ENCODE measurements at regions of chr12 and their contacts with region 1.

Region 1: GRCh38 chr12:58540480-58541299 is 379.6 kb downstream of the LRIG3 start:
- DNase-seq: no peak
- H3K4me3 ChIP-seq: no peak overlapping the region
- H3K27me3 ChIP-seq: no peaks in the 10 kb centered on the region
- CTCF ChIP-seq: peak; percentile 88

Region 2: GRCh38 chr12:57632694-57633477 is 907.8 kb before region 1 on chr12 and contains the start of gene B4GALNT1:
- CTCF ChIA-PET with region 1: no interaction called
- POLR2A ChIA-PET with region 1: no interaction called
- DNase-seq: no peak
- H3K4me3 ChIP-seq: peak within 1 kb of the TSS; percentile 49
- H3K27me3 ChIP-seq: peaks cover 16% of the 10 kb centered on the region
- CTCF ChIP-seq: peak; percentile 87
- polyA plus RNA-seq, gene B4GALNT1: 1.2 and 2.7 TPM in 2 replicates

Region 3: DNA sequence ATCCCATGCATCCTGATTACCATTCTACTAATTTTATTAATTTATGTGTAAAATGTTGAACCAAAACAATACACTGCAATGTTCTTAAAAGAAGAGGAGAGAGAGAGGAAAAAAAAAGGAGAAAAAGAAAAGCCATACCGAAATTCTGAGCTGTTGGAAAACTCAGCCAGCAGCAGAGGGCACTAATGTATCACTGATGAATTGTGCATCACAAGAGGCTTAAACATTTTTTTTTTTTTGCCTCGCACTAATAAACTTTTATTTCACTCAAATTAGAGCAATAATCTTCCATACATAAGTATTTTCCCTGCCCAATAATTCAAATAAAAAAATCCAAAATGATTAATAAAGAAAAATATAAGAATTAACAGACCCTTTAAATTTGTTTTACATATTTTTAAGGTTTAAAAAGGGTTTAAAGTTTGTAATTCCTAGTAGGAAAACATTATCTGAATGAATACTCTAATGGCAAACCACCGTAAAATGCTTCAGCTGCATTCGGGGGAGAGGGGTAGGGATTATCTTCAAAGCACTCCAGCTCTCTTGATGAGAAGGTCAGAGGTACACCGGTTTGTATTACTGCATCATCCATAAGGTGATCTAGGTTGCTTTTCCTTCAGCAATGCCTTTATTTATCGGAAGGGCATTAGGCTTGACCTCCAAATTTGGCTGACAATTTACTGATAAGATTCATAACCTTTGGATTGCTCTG is 557.4 kb before region 1 on chr12:
- CTCF ChIA-PET with region 1: interaction called, 15 read pairs
- POLR2A ChIA-PET with region 1: no interaction called
- DNase-seq: peak; percentile 17
- H3K4me3 ChIP-seq: no peak overlapping the region
- H3K27me3 ChIP-seq: no peaks in the 10 kb centered on the region
- CTCF ChIP-seq: peak; percentile 65

Region 4: GRCh38 chr12:58416236-58416635 is 124.5 kb before region 1 on chr12:
- CTCF ChIA-PET with region 1: interaction called, 13 read pairs
- POLR2A ChIA-PET with region 1: no interaction called
- DNase-seq: peak; percentile 75
- H3K4me3 ChIP-seq: no peak overlapping the region
- H3K27me3 ChIP-seq: no peaks in the 10 kb centered on the region
- CTCF ChIP-seq: peak; percentile 44

Region 5: DNA sequence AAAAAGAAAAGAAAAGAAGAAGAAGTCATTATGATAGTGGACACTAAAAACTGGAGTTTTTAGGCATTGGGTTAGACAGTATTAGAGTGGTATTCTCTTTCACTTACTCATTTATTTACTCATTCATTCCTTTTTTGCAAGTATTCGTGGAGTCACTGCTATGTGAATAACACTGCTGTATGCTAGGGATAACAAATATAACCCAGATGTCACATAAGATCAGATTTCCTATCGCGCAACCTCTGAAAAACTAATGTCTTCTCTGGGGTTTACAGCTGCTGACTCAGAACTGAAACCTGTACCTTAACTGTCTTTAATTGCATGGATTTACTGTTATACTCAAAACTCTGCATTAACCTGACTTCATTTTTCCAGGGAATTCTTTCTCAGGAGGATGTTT is 25.9 kb after region 1 on chr12:
- CTCF ChIA-PET with region 1: interaction called, 20 read pairs
- POLR2A ChIA-PET with region 1: no interaction called
- DNase-seq: peak; percentile 97
- H3K4me3 ChIP-seq: no peak overlapping the region
- H3K27me3 ChIP-seq: no peaks in the 10 kb centered on the region
- CTCF ChIP-seq: no peak

Region 6: GRCh38 chr12:59077575-59078426 is 537.1 kb after region 1 on chr12:
- CTCF ChIA-PET with region 1: interaction called, 10 read pairs
- POLR2A ChIA-PET with region 1: no interaction called
- DNase-seq: no peak
- H3K4me3 ChIP-seq: no peak overlapping the region
- H3K27me3 ChIP-seq: no peaks in the 10 kb centered on the region
- CTCF ChIP-seq: no peak

Region 7: DNA sequence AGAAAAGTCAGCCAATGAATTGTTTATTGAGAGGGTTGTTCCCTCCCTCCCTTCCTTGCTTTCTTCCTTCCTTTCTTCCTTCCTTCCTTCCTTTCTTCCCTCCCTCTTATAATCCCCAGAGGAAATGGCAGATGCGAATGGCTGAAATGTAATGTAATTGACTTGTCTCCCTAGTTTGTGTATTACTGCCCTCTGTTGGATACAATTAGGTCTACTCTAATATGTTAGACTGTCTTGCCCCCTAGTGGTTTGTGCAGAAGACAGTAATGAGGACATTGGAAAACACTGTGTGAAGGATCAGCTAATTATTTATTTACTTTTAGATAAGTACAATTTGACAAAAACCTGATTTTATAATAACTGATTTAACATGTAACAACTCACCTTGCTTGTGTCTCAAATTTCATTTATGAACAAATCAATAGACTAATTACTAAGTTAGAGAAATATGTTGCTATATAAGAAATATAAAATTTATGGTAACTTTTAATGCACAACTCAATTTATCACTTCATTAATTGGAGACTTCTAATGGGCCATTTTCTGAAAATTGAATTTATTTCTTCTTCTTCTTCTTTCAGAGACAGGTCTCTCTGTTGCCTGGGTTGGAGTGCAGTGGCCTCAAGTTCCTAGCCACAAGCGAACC is 609.4 kb after region 1 on chr12:
- CTCF ChIA-PET with region 1: interaction called, 17 read pairs
- POLR2A ChIA-PET with region 1: no interaction called
- DNase-seq: no peak
- H3K4me3 ChIP-seq: no peak overlapping the region
- H3K27me3 ChIP-seq: no peaks in the 10 kb centered on the region
- CTCF ChIP-seq: peak; percentile 83